ENCODE measurements at regions of chr19 and their contacts with region 1.

Region 1: GRCh38 chr19:54967611-54968010 is 1.4 kb downstream of the NLRP2 start:
- DNase-seq: no peak
- ATAC-seq: no peak
- H3K4me3 ChIP-seq: no peak overlapping the region
- H3K27ac ChIP-seq: no peak overlapping the region
- H3K4me1 ChIP-seq: no peaks in the 10 kb centered on the region
- H3K27me3 ChIP-seq: no peaks in the 10 kb centered on the region
- CTCF ChIP-seq: no peak

Region 2: GRCh38 chr19:54616821-54617560 is 350.6 kb before region 1 on chr19:
- CTCF ChIA-PET with region 1: interaction called, 13 read pairs
- POLR2A ChIA-PET with region 1: no interaction called
- in situ Hi-C with region 1: no loop called
- intact Hi-C with region 1: no loop called
- DNase-seq: no peak
- ATAC-seq: no peak
- H3K4me3 ChIP-seq: no peak overlapping the region
- H3K27ac ChIP-seq: no peak overlapping the region
- H3K4me1 ChIP-seq: no peaks in the 10 kb centered on the region
- H3K27me3 ChIP-seq: 0 out of 2 replicates have a peak, but pooled peaks cover 2% of the 10 kb centered on the region
- CTCF ChIP-seq: no peak